Esophagus muscularis mucosa (tissue), 4 donors: ENCODE measurements at regions of chr17 and their contacts with region 1.

Region 1: DNA sequence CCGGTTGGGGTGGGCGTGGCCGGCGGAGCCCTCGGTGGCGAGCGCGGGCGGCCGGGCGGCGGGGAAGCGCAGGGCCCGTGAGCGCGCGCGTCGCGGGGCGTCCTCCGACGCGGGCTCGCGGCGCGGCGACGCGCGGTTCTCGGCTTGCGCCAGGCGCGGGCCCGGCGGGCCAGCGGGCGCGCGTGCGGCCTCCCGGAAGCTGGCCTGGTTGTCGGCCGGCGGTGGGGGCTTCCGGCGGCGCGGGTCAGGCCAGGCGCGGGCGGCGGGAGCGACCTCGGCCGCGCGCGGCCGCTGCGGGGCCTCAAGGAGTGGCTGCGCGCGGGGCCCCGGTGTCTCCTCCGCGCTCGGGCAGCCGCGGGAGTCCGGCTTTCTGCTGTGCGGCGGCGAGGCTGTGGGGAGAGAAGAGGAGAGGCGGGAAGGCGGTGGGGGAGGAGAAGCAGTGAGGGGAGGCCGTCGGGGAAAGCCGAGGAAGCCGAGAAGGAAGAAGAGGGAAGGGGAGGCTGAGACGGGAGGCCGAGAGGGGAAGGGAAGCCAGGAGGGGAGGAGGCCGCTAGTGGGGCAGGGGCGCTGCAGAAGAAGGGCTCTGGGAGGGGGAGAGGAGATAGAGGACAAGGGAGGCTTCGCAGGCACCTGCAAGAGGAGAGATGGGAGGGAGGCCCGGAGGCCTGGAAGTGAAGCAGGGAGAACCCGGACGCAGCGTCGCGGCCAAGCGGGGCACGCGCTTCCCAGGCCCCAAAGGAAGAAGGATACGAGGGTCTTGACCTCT is 2.5 kb downstream of the C17orf58 start:
- DNase-seq: no peak
- H3K4me3 ChIP-seq: peak overlapping the region; percentile 71 to 80 (median 75)
- H3K27ac ChIP-seq: peak overlapping the region; percentile 95 to 98 (median 97)
- H3K4me1 ChIP-seq: peaks cover 13 to 43% (median 35%) of the 10 kb centered on the region in 4 donors
- H3K27me3 ChIP-seq: no peaks in the 10 kb centered on the region
- CTCF ChIP-seq: no peak
- EP300 ChIP-seq: no peak
- POLR2A ChIP-seq: peak; percentile 24

Region 2: DNA sequence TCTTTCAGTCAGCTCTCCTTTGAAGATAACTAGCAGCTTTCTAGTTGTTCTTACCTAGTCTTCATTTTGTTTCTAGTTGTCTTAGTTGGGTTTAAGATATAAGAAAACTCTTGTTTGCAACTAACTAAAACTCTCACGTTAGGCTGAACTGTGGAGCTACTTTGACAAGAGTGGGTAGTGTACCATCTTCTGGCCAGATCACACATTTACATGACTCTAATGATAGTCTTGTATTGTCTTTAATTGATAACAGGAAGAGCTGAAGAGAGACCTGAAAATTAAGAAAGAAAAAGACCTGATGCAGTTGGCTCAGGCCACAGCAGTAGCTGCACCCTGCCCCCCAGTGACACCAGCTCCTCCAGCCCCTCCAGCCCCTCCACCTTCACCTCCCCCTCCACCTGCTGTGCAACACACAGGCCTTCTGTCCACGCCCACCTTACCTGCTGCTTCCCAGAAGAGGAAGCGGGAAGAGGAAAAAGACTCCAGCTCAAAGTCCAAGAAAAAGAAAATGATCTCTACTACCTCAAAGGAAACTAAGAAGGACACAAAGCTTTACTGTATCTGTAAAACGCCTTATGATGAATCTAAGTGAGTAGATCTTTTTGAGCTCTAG is 34.4 kb before region 1 on chr17:
- intact Hi-C with region 1: loop called (anchors 5 kb)
- DNase-seq: no peak
- H3K4me3 ChIP-seq: no peak overlapping the region
- H3K27ac ChIP-seq: no peak overlapping the region
- H3K4me1 ChIP-seq: peaks cover 0 to 3% (median 0%) of the 10 kb centered on the region in 4 donors
- H3K27me3 ChIP-seq: no peaks in the 10 kb centered on the region
- CTCF ChIP-seq: no peak
- EP300 ChIP-seq: no peak
- POLR2A ChIP-seq: no peak

Region 3: DNA sequence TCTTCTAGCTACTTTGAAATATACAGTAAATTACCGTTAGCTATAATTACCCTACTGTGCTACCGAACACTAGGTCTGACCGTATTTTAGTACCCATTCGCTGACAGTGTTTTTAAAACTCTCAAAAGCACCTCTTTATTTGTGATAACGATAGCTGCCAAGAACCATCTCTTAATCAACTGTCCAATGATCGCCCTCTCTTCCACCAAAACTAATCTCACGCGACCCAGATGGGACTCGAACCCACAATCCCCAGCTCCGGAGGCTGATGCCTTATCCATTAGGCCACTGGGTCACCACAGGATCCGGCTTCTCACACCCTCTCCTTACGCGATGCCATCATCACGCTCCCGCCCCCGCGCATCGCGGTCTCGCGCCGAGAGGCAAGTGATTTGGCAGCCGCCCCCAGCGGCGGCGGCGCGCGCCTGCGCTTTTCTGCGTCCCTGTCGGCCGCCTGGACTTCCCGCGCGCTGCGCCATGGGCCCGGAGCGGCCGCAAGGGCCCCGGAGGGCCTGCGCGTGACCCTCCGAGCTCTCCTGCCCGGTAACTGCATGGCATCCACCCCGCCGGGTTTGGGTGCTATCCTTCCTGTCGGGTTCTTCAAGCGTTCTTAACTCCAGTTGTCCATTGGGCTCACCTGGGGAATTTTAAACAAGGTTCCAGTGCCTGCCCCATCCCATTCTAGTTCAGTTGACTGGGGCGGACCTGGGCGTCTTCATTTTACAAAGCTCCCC is 26.1 kb after region 1 on chr17:
- intact Hi-C with region 1: loop called (anchors 1 kb)
- DNase-seq: peak; percentile 99
- H3K4me3 ChIP-seq: peak overlapping the region; percentile 55 to 69 (median 66)
- H3K27ac ChIP-seq: peak overlapping the region; percentile 86 to 91 (median 88)
- H3K4me1 ChIP-seq: peaks cover 8 to 19% (median 14%) of the 10 kb centered on the region in 4 donors
- H3K27me3 ChIP-seq: no peaks in the 10 kb centered on the region
- CTCF ChIP-seq: peak; percentile 24 to 55 (median 36)
- EP300 ChIP-seq: no peak
- POLR2A ChIP-seq: peak; percentile 33

Region 4: DNA sequence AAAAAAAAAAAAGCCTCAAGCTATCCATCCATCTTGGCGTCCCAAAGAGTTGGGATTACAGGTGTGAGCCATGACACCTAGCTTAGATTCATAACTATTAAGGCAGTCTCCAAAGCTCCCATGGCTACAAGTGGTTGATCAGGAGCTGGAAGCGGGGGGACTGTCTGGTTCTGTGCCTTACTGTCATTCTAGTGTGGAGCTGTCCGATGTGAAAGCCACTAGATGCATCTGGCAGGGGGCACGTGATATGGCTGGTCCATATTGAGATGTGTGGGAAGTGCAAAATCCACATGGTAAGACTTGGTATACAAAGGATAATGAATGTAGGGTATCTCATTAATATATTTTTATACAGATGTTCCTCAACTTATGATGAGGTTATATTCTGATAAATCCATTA is 80.5 kb after region 1 on chr17:
- intact Hi-C with region 1: no loop called
- DNase-seq: no peak
- H3K4me3 ChIP-seq: no peak overlapping the region
- H3K27ac ChIP-seq: no peak overlapping the region
- H3K4me1 ChIP-seq: peaks cover 0 to 8% (median 6%) of the 10 kb centered on the region in 4 donors
- H3K27me3 ChIP-seq: no peaks in the 10 kb centered on the region
- CTCF ChIP-seq: no peak
- EP300 ChIP-seq: no peak
- POLR2A ChIP-seq: no peak

Region 5: DNA sequence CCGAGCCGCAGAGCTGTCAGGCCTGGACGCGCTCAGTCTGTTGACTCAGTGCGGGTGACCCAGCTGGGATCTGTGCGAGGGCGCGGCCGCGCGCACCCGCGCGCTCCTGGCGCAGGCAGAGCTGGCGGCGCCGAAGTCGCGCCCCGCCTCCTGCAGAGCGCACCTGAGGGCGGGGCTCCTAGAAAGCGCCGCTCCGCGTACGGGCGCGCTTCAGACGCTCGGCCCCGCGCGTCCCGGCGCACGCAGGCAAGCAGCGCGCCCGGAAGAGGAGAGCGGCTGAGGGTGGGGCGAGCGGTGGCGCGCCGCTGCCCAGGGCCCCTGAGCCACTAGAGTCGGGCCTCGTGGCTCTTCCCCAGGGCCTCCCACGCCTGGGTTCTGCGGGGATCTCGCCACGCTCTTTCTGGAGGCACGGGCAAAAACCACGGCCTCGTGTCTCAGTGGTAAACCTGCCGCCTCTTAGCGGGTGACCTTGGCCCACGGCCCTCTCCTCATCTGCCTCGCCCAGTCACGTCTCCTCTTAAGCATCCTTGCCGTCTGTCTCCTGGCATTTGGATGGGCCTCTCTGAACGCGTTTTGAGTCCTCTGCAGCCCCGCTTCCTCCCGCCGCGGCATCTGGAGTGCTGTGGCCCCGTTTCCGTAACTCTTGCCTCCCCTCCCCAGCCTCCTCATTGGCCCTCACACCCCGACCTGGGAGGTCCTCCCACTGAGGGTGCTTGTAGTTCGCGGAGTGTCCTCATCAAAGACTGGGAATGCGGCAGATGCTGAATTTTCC is 1333.5 kb after region 1 on chr17 and contains the start of gene ABCA5:
- intact Hi-C with region 1: loop called (anchors 10 kb)
- DNase-seq: peak; percentile 95
- H3K4me3 ChIP-seq: peak within 1 kb of the TSS; percentile 76 to 86 (median 77)
- H3K27ac ChIP-seq: peak within 1 kb of the TSS; percentile 89 to 92 (median 90)
- H3K4me1 ChIP-seq: peaks cover 5 to 20% (median 16%) of the 10 kb centered on the region in 4 donors
- H3K27me3 ChIP-seq: no peaks in the 10 kb centered on the region
- CTCF ChIP-seq: peak in 1 of 3 experiments; percentile 21
- EP300 ChIP-seq: no peak
- POLR2A ChIP-seq: peak; percentile 45
- total RNA-seq, gene ABCA5: 8.8 to 20.8 (median 11.5) TPM